Right ventricle myocardium inferior (tissue), 1 donor: ENCODE measurements at regions of chr4 and their contacts with region 1.

Region 1: DNA sequence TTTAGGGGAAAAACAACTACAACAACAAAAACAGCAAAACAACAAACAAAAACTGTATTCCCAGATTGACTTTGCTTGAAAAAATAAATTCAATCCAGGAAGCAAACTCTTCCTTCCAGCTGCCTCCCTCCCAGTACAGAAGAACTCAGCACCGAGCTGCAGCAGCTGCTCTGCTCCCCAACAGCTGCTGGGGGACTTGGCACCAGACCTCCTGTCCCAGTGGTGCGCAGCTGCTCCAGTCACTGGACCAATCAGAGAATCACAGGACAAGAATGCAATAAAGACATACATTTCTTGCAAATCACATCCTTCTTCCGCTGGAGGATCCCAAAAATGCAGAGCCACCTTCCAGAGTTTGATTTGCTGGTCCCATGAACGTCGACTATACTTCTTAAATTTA is 11.8 kb upstream of the FAM53A start:
- DNase-seq: no peak
- ATAC-seq: peak; percentile 43

Region 2: DNA sequence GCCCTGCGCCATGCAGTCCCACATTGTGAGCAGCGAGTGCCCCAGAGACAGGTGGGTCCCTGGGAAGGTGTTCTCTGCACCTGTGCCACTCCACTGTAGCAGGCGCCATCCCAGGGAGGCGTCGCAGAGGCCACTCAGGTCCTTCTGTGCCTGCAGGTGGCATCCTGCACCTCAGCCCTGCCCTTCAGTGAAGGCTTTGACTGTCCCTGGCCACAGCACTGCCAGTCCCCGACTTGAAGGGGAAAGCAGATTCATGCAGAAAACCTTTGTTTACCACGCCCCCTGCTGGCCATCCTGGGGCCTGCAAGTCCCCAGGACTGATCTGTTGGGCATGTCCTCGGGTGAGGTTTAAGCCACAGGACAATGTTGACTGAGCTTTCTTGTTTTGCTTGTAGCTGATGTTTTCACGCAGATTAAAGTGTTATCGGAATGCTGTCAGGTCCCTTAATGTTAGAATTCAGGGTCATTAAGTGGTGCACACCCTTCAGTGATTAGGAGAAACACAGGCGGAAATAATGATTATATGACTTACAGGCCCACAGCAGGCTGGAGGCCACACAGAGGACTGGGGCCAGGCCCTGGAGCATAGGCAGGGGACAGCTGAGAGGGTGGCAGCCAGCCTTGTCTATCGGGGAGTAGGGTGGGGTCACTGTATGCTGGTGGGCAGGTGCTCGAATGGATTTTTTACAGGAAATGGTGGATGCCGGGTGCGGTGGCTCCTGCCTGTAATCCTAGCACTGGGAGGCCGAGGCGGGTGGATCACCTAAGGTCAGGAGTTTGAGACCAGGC is 30.4 kb after region 1 on chr4:
- intact Hi-C with region 1: loop called (anchors 2 kb)
- DNase-seq: peak; percentile 92
- ATAC-seq: peak; percentile 47